Ovary (tissue), 10 donors: ENCODE measurements at regions of chr4 and their contacts with region 1.

Region 1: DNA sequence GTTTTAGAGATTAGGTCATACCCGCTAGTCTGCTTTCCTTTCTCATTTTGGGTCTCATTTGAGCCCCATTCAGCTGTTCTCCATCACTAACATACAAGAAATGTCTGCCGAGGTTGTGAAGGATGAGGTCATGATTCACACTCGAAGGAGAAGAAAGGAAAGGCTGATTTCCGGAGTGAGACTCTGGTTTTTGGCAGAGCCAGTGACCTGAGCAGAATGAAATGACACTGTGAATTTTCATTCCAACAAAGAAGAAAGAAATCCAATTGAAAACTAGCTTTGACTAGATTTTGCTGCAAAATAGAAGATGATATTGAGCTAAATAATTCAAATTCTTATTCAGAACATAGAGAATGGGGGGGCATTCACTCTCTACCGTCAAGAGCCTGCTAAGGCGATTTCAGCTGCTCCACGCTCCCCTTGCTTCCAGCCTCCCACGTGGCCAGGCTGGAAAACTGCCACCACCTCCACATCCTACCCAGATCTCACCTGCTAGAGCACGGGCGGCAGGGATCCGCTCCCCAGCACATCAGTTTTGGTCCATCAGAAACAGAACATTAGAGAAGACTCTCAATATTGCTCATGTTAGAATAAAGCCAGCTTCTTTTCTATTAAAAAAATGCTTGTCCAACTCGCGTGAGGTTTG is 39.0 kb downstream of the F11 start:
- DNase-seq: no peak
- H3K4me3 ChIP-seq: no peak overlapping the region
- H3K27ac ChIP-seq: no peak overlapping the region
- H3K4me1 ChIP-seq: no peaks in the 10 kb centered on the region
- H3K27me3 ChIP-seq: no peaks in the 10 kb centered on the region
- CTCF ChIP-seq: no peak
- EP300 ChIP-seq: no peak
- POLR2A ChIP-seq: no peak

Region 2: GRCh38 chr4:186563761-186564160 is 258.8 kb after region 1 on chr4:
- intact Hi-C with region 1: loop called in 1 of 4 experiments (anchors 10 kb)
- DNase-seq: no peak
- H3K4me3 ChIP-seq: no peak overlapping the region
- H3K27ac ChIP-seq: no peak overlapping the region
- H3K4me1 ChIP-seq: no peaks in the 10 kb centered on the region
- H3K27me3 ChIP-seq: no peaks in the 10 kb centered on the region
- CTCF ChIP-seq: no peak
- EP300 ChIP-seq: no peak
- POLR2A ChIP-seq: no peak

Region 3: DNA sequence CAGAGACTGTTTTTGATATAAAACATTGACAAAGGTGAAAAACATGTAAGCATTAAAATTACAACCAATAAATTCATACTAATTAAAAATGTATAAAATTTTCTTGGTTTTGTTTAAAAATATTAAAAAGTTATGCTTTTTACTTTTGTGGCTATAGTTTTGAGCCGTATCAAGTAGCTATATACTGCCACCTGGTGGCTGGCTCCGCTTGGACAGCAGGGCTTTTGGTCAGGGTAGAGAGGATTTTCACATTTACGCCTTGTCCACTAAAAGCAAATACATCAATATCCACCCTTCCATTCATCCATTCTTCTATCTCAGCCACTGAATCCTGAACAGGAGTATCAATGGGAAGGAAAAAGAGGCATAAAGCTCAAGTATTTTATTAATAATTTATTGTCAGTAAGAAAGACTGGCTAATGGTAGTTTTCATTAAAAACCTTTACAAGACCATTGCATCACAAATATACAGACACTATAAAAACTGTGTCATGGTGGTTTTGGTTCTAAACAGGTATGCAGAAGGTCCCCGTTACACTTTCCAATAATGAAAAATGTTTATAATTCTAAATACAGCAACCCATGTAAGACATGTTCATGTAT is 282.5 kb after region 1 on chr4:
- intact Hi-C with region 1: loop called in 1 of 4 experiments (anchors 10 kb)
- DNase-seq: peak; percentile 51 to 77 (median 69)
- H3K4me3 ChIP-seq: no peak overlapping the region
- H3K27ac ChIP-seq: no peak overlapping the region
- H3K4me1 ChIP-seq: peaks cover 2% of the 10 kb centered on the region
- H3K27me3 ChIP-seq: no peaks in the 10 kb centered on the region
- CTCF ChIP-seq: peak; percentile 36 to 63 (median 59)
- EP300 ChIP-seq: no peak
- POLR2A ChIP-seq: no peak